ENCODE measurements at regions of chr16 and their contacts with region 1.

Region 1: DNA sequence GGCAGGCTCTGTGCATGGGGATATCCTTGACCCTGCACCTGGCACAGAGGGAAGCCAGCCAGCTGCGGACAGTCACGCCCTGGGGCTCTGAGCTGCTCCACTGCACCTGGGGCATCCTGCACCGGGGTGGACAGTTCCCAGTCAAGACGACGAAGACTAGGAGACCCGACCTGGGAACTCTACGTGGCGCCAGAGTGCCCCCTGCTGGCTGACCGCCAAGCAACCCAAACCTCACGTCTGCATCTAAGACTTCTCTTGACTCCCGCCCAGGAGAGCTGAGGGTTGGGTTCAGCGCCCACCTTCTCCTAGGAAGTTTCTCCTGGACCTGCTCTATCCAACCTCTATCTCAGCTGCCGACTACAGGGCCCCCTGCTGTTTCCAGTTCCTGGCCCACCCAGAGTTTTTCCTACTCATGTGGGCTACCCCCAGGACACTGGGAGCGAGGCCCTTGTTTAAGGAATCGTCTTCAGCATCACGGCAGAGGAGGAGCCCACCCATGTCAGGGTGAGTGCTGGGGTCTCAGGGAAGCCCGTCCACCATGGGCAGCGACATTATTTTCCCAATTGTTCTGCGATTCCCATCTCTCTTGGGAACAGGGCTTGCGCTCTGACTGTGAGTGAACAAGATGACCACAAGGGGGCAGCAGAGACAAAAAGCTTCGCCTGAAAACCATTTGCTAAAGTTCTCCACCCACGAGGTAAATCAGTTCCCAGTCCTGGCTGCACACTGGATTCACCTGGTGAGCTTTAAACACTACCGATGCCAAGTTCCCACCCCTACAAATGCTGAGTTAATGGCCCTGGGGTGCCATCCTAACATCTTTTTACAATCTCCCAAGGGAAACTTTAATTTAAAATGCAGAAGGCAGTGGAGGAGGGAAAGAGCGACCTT is 29.3 kb downstream of the TLE7 start:
- DNase-seq: peak; percentile 77
- ATAC-seq: peak; percentile 80
- H3K4me3 Mint-ChIP-seq: no peak overlapping the region
- H3K27ac Mint-ChIP-seq: no peak overlapping the region
- H3K4me1 Mint-ChIP-seq: peaks cover 13% of the 10 kb centered on the region
- H3K27me3 Mint-ChIP-seq: peaks cover 27% of the 10 kb centered on the region

Region 2: GRCh38 chr16:71426072-71426879 is 13.8 kb after region 1 on chr16:
- CTCF ChIA-PET with region 1: interaction called, 18 read pairs
- POLR2A ChIA-PET with region 1: no interaction called
- DNase-seq: peak; percentile 61
- ATAC-seq: peak; percentile 80
- H3K4me3 Mint-ChIP-seq: peak overlapping the region; percentile 28
- H3K27ac Mint-ChIP-seq: no peak overlapping the region
- H3K4me1 Mint-ChIP-seq: peaks cover 6% of the 10 kb centered on the region
- H3K27me3 Mint-ChIP-seq: peaks cover 32% of the 10 kb centered on the region

Region 3: GRCh38 chr16:71669932-71670536 is 257.5 kb after region 1 on chr16:
- CTCF ChIA-PET with region 1: no interaction called
- POLR2A ChIA-PET with region 1: no interaction called
- DNase-seq: no peak
- ATAC-seq: no peak
- H3K4me3 Mint-ChIP-seq: no peak overlapping the region
- H3K27ac Mint-ChIP-seq: no peak overlapping the region
- H3K4me1 Mint-ChIP-seq: no peaks in the 10 kb centered on the region
- H3K27me3 Mint-ChIP-seq: no peaks in the 10 kb centered on the region

Measured in activated CD8-positive, alpha-beta T cell treated with anti-CD3 and anti-CD28 coated beads, Interleukin-2, amount 10 ng/mL, durations not matched to agents 7 days and 5 days (primary cell).